Left colon (tissue), 2 donors: ENCODE measurements at regions of chr1 and their contacts with region 1.

Region 1: DNA sequence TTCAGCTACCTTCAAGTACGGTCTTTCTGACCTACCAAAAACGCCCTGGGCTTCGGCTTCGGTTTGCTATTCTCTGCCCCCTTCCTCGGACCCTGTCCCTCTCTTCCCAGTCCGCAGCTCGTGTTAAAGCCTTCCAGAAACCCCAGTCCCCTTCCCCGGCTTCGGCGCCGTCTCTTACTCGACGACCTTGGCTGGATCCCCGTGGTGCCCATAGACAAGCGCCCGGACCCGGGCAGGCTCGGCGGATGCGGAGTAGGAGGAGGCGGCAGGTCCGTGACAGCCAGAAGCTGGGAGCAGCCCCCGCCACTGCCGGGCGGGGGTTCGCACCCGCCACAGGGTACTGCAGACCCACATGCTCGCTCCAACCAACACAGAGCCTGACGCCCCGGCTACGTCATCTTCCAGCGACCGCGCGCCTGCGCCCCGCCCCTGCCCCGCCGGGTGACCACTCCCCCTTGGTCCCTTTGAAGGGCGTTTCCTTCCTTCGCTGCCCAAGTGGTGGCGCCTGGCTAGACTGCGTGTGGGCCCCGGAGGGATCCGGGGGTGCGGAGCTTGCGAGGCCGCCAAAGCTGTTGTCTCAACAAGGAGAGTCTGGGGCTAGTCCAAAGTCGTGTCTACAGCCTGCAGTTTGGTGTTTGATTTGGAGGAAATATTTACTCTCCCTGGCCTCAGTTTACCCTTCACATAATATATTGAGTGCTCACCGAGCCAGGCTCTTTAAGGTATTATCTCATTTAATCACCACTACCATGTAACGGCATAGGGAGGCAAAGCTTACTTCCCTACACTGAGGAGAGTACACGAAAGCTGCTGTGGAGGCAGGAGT is at the start of gene MECR:
- DNase-seq: peak; percentile 91 to 95
- ATAC-seq: peak; percentile 97
- total RNA-seq, gene MECR: 14.3 to 20.6 TPM

Region 2: DNA sequence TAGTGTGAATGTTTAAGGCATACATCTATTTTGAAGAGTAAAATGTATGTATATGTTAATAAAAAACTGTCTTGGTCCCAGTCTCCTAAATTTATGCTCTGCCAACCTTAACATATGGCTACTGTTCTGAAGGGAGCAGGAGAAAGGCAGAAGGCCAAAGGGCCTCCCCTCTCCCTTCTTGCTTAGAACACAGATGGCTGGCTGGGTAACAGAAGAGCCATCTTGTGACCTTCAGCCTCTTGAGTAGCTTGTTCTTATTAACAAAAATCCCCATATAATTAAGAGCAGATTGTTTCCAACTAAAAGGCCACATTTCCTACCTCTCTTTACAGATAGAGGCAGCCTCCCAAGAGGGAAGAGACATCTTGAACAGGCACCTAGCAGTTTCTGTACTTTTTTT is 280.3 kb before region 1 on chr1:
- intact Hi-C with region 1: no loop called
- DNase-seq: no peak
- ATAC-seq: no peak

Region 3: GRCh38 chr1:29055160-29055559 is 175.6 kb before region 1 on chr1:
- intact Hi-C with region 1: no loop called
- DNase-seq: no peak
- ATAC-seq: no peak

Region 4: GRCh38 chr1:29083317-29084195 is 147.2 kb before region 1 on chr1:
- intact Hi-C with region 1: no loop called
- DNase-seq: no peak
- ATAC-seq: no peak

Region 5: GRCh38 chr1:30085811-30086770 is 855.3 kb after region 1 on chr1:
- intact Hi-C with region 1: loop called in 1 of 2 experiments (anchors 10 kb)
- DNase-seq: peak in 1 of 2 donors; percentile 55
- ATAC-seq: no peak

Region 6: GRCh38 chr1:30106125-30106524 is 875.4 kb after region 1 on chr1:
- intact Hi-C with region 1: loop called in 1 of 2 experiments (anchors 10 kb)
- DNase-seq: peak in 1 of 2 donors; percentile 35
- ATAC-seq: peak; percentile 67

Region 7: GRCh38 chr1:30379684-30380624 is 1149.2 kb after region 1 on chr1:
- intact Hi-C with region 1: loop called (anchors 10 kb)
- DNase-seq: peak in 1 of 2 donors; percentile 57
- ATAC-seq: peak; percentile 88

Region 8: DNA sequence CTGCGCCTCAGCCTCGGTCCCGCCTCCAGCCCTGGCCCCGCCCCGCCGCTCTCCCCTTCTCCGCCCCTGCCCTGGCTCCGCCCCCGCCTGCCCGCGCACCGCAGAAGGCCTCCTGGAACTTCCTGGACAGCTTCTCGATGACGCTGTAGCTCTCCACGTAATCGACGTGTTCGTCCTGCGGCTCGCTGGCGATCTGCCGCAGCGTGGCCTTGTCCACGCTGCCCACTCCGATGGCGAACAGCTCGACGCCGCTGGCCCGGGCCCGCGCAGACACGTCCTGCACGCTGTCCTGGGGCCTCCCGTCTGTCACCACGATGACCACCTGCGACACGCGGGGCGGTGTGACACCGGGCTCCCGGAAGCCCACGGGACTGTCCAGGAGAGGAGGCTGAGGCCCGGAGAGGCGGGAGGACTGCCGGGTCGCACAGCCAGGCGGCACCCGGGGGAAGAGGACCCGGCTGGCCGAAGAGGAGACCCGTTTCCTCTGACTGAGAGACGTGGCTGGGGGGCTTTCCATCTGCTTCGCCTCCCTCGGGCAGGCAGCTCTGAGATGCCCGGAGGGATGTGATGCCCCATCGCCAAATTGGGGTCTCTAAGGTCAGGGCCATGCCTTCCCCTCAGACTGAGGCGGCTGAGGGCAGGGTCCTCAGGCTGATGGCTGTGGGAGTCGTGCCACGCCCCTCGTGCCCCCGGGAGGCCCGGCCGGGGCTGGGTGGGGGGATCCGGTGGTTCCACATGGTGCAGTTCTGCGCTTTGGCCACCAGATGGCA is 1488.1 kb after region 1 on chr1:
- intact Hi-C with region 1: loop called in 1 of 2 experiments (anchors 10 kb)
- DNase-seq: peak; percentile 79 to 99
- ATAC-seq: peak; percentile 78